Psoas muscle (tissue), 8 donors: ENCODE measurements at regions of chr2 and their contacts with region 1.

Region 1: GRCh38 chr2:119234377-119235019 is 10.9 kb downstream of the STEAP3 start:
- DNase-seq: no peak
- ATAC-seq: peak; percentile 31 to 56 (median 48)
- H3K4me3 ChIP-seq: no peak overlapping the region
- H3K27ac ChIP-seq: peak overlapping the region; percentile 78
- H3K4me1 ChIP-seq: peaks cover 95% of the 10 kb centered on the region
- H3K27me3 ChIP-seq: no peaks in the 10 kb centered on the region
- CTCF ChIP-seq: peak; percentile 21

Region 2: DNA sequence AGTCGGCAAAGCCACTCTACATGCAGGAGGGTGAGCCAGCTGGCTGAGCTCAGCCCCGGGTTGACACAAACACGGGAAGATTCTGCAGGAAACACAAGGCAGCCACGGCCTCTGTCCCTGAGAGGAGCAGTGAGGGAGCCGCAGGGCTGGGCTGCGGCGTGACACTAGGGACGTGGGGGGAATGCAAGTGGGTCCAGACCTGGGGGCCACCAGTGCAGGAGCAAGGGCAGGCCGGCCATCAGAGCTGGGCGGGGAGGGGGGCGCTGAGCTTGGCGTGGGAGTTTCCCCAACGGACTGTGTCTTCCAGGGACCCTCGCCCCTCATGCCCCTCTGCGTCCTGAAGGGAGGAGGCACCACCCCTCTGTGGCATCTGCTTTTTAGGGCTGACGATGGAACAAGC is 64.0 kb before region 1 on chr2:
- intact Hi-C with region 1: no loop called
- DNase-seq: no peak
- ATAC-seq: no peak
- H3K4me3 ChIP-seq: no peak overlapping the region
- H3K27ac ChIP-seq: no peak overlapping the region
- H3K4me1 ChIP-seq: no peaks in the 10 kb centered on the region
- H3K27me3 ChIP-seq: no peaks in the 10 kb centered on the region
- CTCF ChIP-seq: no peak

Region 3: DNA sequence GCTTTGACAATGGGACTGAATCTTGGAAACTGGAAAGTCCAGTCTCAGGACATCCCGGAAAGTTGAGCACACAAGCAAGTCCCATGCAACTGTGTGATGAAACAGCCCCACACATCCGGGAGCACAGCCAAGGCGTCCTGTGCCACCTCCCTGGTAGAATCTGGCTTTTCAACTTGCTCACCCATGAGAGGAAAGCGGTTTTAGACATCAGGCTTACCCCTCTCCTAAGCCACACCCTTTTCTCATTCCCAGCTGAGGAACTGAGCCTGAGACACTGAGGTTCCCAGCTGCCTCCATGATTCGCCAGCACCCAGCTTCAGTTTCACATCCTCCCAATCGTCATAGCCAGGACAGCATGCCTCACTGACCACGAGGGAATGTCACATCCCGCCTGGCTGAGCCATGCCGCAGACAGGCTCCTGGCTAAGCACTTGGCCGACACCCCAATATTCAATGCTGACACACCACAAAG is 49.4 kb after region 1 on chr2:
- intact Hi-C with region 1: loop called in 1 of 2 experiments (anchors 5 kb)
- DNase-seq: peak; percentile 84 to 94
- ATAC-seq: peak; percentile 96 to 98 (median 98)
- H3K4me3 ChIP-seq: peak overlapping the region; percentile 28
- H3K27ac ChIP-seq: peak overlapping the region; percentile 81
- H3K4me1 ChIP-seq: peaks cover 15% of the 10 kb centered on the region
- H3K27me3 ChIP-seq: no peaks in the 10 kb centered on the region
- CTCF ChIP-seq: no peak